Activated B cell treated with CpG ODN at 0.5 μM for 24 hours (primary cell): ENCODE measurements at regions of chr11 and their contacts with region 1.

Region 1: GRCh38 chr11:13384908-13385640 is 77.9 kb downstream of the BTBD10 start:
- DNase-seq: no peak
- ATAC-seq: no peak
- H3K4me3 Mint-ChIP-seq: no peak overlapping the region
- H3K27ac Mint-ChIP-seq: no peak overlapping the region
- H3K4me1 Mint-ChIP-seq: no peaks in the 10 kb centered on the region
- H3K27me3 Mint-ChIP-seq: no peaks in the 10 kb centered on the region
- CTCF ChIP-seq: no peak

Region 2: DNA sequence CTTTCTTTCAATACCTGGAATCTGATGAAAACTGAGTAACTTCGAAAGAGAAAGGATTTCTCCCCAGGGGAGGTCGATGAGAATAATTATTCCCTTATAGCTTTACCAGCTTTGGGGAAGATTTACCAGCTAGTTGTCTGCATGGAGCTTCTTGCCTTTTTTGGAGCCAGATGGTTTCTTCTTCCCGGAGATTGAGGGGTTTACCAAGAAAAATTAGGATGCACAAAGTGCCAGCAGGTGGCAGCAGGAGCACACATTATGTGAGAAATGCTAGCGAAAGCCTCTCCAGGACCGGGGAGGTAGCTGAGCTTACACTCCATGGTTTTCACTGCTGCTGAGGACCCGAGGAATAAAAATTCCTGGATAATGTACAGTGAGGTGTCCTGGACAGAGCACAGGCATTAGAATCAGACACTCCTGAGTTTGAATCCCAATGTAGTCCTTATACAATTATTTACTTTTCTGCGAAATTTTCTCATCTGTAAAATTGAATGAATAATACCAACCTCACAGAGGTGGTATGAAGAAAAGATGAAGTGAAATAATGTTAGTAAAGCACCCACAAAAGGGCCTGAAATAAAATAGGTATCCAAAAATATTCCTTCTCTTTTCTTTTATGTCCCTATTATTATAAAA is 1053.7 kb before region 1 on chr11:
- CTCF ChIA-PET with region 1: no interaction called
- POLR2A ChIA-PET with region 1: no interaction called
- intact Hi-C with region 1: loop called (anchors 5 kb)
- DNase-seq: no peak
- ATAC-seq: no peak
- H3K4me3 Mint-ChIP-seq: no peak overlapping the region
- H3K27ac Mint-ChIP-seq: no peak overlapping the region
- H3K4me1 Mint-ChIP-seq: no peaks in the 10 kb centered on the region
- H3K27me3 Mint-ChIP-seq: peaks cover 8% of the 10 kb centered on the region
- CTCF ChIP-seq: no peak

Region 3: GRCh38 chr11:13183094-13183825 is 201.8 kb before region 1 on chr11:
- CTCF ChIA-PET with region 1: no interaction called
- POLR2A ChIA-PET with region 1: no interaction called
- intact Hi-C with region 1: loop called (anchors 2 kb)
- DNase-seq: no peak
- ATAC-seq: no peak
- H3K4me3 Mint-ChIP-seq: no peak overlapping the region
- H3K27ac Mint-ChIP-seq: no peak overlapping the region
- H3K4me1 Mint-ChIP-seq: no peaks in the 10 kb centered on the region
- H3K27me3 Mint-ChIP-seq: peaks cover 4% of the 10 kb centered on the region
- CTCF ChIP-seq: no peak

Region 4: GRCh38 chr11:13210424-13210823 is 174.7 kb before region 1 on chr11:
- CTCF ChIA-PET with region 1: interaction called, 12 read pairs
- POLR2A ChIA-PET with region 1: no interaction called
- intact Hi-C with region 1: loop called (anchors 1 kb)
- DNase-seq: no peak
- ATAC-seq: no peak
- H3K4me3 Mint-ChIP-seq: no peak overlapping the region
- H3K27ac Mint-ChIP-seq: no peak overlapping the region
- H3K4me1 Mint-ChIP-seq: peaks cover 12% of the 10 kb centered on the region
- H3K27me3 Mint-ChIP-seq: peaks cover 20% of the 10 kb centered on the region
- CTCF ChIP-seq: no peak